ENCODE measurements at regions of chr12 and their contacts with region 1.

Region 1: DNA sequence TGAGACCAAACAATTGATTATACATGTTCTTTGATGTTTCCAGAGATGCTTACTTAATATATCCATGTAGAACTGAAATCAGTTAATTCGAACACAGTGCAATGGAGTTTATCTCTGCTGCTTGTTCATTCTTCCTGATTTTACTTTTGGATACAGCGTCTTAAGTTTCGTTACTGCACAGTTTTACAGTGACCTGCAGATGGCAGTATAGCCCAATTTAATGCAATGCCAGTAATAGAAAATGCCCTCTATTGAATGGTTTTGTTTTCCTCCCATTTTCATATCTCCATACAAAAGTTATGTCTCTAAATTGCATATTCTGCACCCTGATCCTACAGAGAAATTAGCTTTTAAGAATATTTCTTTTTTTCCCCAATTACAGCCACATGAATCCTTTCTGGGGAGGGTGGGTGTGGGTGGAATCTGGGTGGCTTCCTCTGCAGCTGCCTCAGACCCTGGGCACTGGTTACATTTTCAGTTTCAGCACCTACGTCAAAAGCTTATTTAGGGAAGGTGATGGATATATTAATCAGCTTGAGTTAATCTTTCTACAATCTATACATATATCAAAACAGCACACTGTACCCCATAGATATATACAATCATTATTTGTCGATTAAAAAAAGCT is 101.1 kb upstream of the DCD start:
- DNase-seq: no peak
- ATAC-seq: peak; percentile 54
- H3K4me3 Mint-ChIP-seq: no peak overlapping the region
- H3K27ac Mint-ChIP-seq: no peak overlapping the region
- H3K4me1 Mint-ChIP-seq: peaks cover 3% of the 10 kb centered on the region
- H3K27me3 Mint-ChIP-seq: peaks cover 2% of the 10 kb centered on the region
- CTCF ChIP-seq: peak; percentile 75

Region 2: DNA sequence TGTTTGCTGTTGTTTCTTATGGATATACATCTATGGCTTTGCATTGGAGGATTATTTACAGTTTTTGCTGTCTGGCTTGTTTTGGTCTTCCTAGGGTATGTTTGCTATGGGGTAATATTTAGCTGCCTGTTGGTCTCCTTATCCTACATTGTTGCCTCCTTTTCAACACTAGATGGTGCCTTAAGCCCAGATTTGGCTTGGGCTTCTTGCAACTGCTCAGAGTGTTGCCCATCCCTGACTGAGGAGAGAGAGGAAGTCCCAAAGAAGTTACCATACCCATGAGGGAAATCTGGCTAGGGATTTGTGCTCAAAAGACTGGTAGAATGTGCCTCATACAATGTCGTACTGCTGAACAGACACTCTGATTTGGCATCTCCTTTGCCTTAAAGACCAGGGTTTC is 10.4 kb after region 1 on chr12:
- CTCF ChIA-PET with region 1: interaction called, 13 read pairs
- POLR2A ChIA-PET with region 1: no interaction called
- intact Hi-C with region 1: no loop called
- DNase-seq: no peak
- ATAC-seq: no peak
- H3K4me3 Mint-ChIP-seq: no peak overlapping the region
- H3K27ac Mint-ChIP-seq: no peak overlapping the region
- H3K4me1 Mint-ChIP-seq: no peaks in the 10 kb centered on the region
- H3K27me3 Mint-ChIP-seq: peaks cover 15% of the 10 kb centered on the region
- CTCF ChIP-seq: no peak

Region 3: DNA sequence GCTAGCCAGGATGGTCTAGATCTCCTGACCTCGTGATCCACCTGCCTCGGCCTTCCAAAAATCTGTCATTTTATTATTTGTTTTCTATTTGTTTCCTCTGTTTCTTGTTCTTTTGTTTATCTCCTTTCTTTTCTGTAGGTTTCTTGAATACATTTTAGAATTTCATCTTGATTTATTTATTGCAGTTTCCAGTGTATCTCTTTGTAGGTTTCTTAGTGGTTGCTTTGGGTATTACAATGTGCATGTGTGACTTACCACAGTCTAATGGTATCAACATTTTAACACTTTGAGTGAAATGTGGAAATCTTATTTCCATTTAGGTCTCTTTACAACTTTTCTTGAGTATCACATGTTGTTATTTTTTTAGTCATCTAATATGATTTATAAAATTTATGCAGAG is 75.1 kb after region 1 on chr12:
- CTCF ChIA-PET with region 1: no interaction called
- POLR2A ChIA-PET with region 1: no interaction called
- intact Hi-C with region 1: no loop called
- DNase-seq: no peak
- ATAC-seq: no peak
- H3K4me3 Mint-ChIP-seq: no peak overlapping the region
- H3K27ac Mint-ChIP-seq: no peak overlapping the region
- H3K4me1 Mint-ChIP-seq: no peaks in the 10 kb centered on the region
- H3K27me3 Mint-ChIP-seq: peaks cover 11% of the 10 kb centered on the region
- CTCF ChIP-seq: no peak

Region 4: DNA sequence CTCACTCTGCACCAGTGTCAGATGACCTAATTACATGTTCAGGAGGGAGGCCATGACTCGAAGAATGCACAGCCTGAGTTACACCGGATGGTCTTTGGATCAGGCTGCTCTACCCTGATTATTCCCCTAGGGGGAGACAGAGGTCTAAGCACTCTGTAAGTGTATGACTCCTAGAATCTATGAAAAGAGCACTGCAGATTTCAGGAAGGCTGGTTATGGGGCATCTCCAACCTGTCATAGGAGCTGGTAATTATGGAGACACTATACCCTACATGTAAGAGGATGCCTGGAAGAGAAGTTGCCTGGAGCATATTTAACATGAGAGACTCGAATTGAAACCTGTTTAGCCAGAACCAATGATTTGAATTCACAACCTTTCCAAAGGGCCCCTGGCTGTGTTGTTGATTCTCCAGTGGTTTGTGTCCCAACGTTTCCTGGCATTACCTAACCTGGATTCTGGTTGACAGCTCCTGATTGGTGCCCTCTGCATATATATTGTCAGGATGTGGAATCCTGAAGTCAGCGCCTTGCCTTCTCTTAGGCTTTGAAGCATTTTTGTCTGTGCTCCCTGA is 104.8 kb after region 1 on chr12 and contains the start of gene MUCL1:
- CTCF ChIA-PET with region 1: interaction called, 3 read pairs
- POLR2A ChIA-PET with region 1: no interaction called
- intact Hi-C with region 1: loop called (anchors 1 kb)
- DNase-seq: no peak
- ATAC-seq: peak; percentile 92
- H3K4me3 Mint-ChIP-seq: no peak within 1 kb of the TSS
- H3K27ac Mint-ChIP-seq: no peak within 1 kb of the TSS
- H3K4me1 Mint-ChIP-seq: no peaks in the 10 kb centered on the region
- H3K27me3 Mint-ChIP-seq: peaks cover 10% of the 10 kb centered on the region
- CTCF ChIP-seq: peak; percentile 77
- total RNA-seq, gene MUCL1: not detected in 2 replicates

Region 5: DNA sequence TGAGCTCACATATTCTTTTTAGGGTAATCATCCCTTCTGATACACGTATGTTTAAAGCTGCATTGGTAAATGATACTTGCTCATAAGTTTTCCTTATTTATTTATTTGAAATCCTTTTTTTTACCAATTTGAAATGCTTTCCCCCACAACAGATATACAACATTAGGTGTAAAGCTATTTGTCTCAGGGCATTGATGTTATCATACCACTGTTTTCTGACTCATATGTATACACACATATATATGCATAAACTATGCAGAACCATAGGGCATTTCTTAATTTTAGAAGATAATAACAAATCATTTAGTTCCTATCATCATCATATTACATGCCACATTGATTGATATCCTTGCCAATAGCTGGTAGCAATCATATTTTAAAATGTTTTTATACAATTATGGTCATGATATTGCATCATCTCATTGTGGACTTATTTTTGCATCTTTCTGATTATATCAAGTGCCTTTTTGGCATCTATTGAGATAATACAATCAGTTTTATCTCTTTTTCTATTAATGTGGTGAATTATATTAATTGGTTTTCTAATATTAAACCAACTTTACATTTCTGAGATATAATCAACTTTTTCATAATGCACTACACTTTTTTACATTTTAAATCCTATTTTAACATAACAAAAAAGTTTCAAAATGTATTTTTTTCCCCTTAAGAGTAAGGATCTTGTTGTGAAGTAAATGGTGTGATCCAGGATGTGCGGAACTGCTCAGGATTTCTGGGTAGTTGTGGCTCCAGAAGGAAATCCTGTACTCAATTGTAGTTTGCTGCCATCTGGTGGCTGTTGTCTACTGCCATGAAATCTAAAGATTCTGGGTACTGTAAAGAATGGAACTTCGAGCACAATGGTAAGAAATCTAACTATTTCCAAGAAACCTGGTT is 393.6 kb after region 1 on chr12:
- CTCF ChIA-PET with region 1: interaction called, 14 read pairs
- POLR2A ChIA-PET with region 1: no interaction called
- intact Hi-C with region 1: loop called (anchors 1 kb)
- DNase-seq: no peak
- ATAC-seq: no peak
- H3K4me3 Mint-ChIP-seq: no peak overlapping the region
- H3K27ac Mint-ChIP-seq: no peak overlapping the region
- H3K4me1 Mint-ChIP-seq: peaks cover 5% of the 10 kb centered on the region
- H3K27me3 Mint-ChIP-seq: peaks cover 3% of the 10 kb centered on the region
- CTCF ChIP-seq: no peak

Measured in activated B cell treated with CpG ODN at 0.5 μM for 24 hours (primary cell).